MCF 10A (cell line): ENCODE measurements at regions of chr20 and their contacts with region 1.

Region 1: GRCh38 chr20:354298-355064 is 7.6 kb downstream of the NRSN2 start:
- DNase-seq: peak; percentile 79
- H3K4me3 Mint-ChIP-seq: no peak overlapping the region
- H3K27ac Mint-ChIP-seq: no peak overlapping the region
- H3K4me1 Mint-ChIP-seq: no peaks in the 10 kb centered on the region
- H3K27me3 Mint-ChIP-seq: no peaks in the 10 kb centered on the region
- CTCF ChIP-seq: peak; percentile 96

Region 2: GRCh38 chr20:401682-402495 is 47.4 kb after region 1 on chr20:
- CTCF ChIA-PET with region 1: interaction called, 11 read pairs
- POLR2A ChIA-PET with region 1: interaction called, 8 read pairs
- intact Hi-C with region 1: no loop called
- DNase-seq: peak; percentile 94
- H3K4me3 Mint-ChIP-seq: peak overlapping the region; percentile 41
- H3K27ac Mint-ChIP-seq: peak overlapping the region; percentile 78
- H3K4me1 Mint-ChIP-seq: peaks cover 19% of the 10 kb centered on the region
- H3K27me3 Mint-ChIP-seq: no peaks in the 10 kb centered on the region
- CTCF ChIP-seq: no peak

Region 3: GRCh38 chr20:431012-431904 is 76.8 kb after region 1 on chr20:
- CTCF ChIA-PET with region 1: interaction called, 118 read pairs
- POLR2A ChIA-PET with region 1: interaction called, 4 read pairs
- intact Hi-C with region 1: loop called (anchors 1 kb)
- DNase-seq: peak; percentile 77
- H3K4me3 Mint-ChIP-seq: no peak overlapping the region
- H3K27ac Mint-ChIP-seq: no peak overlapping the region
- H3K4me1 Mint-ChIP-seq: peaks cover 7% of the 10 kb centered on the region
- H3K27me3 Mint-ChIP-seq: no peaks in the 10 kb centered on the region
- CTCF ChIP-seq: peak; percentile 67

Region 4: DNA sequence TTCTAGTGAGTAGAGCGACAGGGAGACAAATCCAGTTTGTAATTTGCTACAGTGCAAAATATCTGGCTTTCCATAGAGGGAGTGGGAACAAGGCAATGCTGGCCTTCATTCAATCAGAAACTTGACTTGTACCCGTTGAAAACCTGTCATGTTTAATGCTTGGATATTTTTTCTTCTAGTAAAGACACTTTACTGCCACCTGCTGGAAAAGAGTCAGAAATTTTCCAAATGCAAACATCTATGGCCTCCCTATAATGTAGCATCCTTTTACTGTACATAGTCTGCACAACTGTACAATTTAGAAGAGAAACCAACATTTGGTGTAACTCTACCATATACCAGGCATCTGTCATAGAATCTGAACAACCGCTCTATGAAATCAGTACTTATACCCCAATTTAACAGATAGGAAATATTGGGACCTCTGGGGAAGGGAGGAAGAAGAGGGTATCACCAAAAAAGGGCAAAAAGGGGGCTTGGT is 124.5 kb after region 1 on chr20:
- CTCF ChIA-PET with region 1: interaction called, 46 read pairs
- POLR2A ChIA-PET with region 1: interaction called, 5 read pairs
- intact Hi-C with region 1: loop called (anchors 1 kb)
- DNase-seq: peak; percentile 71
- H3K4me3 Mint-ChIP-seq: no peak overlapping the region
- H3K27ac Mint-ChIP-seq: no peak overlapping the region
- H3K4me1 Mint-ChIP-seq: peaks cover 11% of the 10 kb centered on the region
- H3K27me3 Mint-ChIP-seq: no peaks in the 10 kb centered on the region
- CTCF ChIP-seq: peak; percentile 51

Region 5: GRCh38 chr20:645318-646106 is 291.0 kb after region 1 on chr20:
- CTCF ChIA-PET with region 1: interaction called, 5 read pairs
- POLR2A ChIA-PET with region 1: no interaction called
- intact Hi-C with region 1: loop called (anchors 1 kb)
- DNase-seq: peak; percentile 58
- H3K4me3 Mint-ChIP-seq: no peak overlapping the region
- H3K27ac Mint-ChIP-seq: no peak overlapping the region
- H3K4me1 Mint-ChIP-seq: peaks cover 5% of the 10 kb centered on the region
- H3K27me3 Mint-ChIP-seq: no peaks in the 10 kb centered on the region
- CTCF ChIP-seq: peak; percentile 91

Region 6: GRCh38 chr20:740141-740540 is 385.7 kb after region 1 on chr20:
- CTCF ChIA-PET with region 1: interaction called, 11 read pairs
- POLR2A ChIA-PET with region 1: no interaction called
- intact Hi-C with region 1: loop called (anchors 5 kb)
- DNase-seq: no peak
- H3K4me3 Mint-ChIP-seq: no peak overlapping the region
- H3K27ac Mint-ChIP-seq: no peak overlapping the region
- H3K4me1 Mint-ChIP-seq: no peaks in the 10 kb centered on the region
- H3K27me3 Mint-ChIP-seq: peaks cover 13% of the 10 kb centered on the region
- CTCF ChIP-seq: no peak